Right ventricle myocardium inferior (tissue), 1 donor: ENCODE measurements at regions of chr15 and their contacts with region 1.

Region 1: GRCh38 chr15:70165716-70166284 is 68.1 kb upstream of the TLE3 start:
- DNase-seq: peak; percentile 75
- ATAC-seq: peak; percentile 93

Region 2: DNA sequence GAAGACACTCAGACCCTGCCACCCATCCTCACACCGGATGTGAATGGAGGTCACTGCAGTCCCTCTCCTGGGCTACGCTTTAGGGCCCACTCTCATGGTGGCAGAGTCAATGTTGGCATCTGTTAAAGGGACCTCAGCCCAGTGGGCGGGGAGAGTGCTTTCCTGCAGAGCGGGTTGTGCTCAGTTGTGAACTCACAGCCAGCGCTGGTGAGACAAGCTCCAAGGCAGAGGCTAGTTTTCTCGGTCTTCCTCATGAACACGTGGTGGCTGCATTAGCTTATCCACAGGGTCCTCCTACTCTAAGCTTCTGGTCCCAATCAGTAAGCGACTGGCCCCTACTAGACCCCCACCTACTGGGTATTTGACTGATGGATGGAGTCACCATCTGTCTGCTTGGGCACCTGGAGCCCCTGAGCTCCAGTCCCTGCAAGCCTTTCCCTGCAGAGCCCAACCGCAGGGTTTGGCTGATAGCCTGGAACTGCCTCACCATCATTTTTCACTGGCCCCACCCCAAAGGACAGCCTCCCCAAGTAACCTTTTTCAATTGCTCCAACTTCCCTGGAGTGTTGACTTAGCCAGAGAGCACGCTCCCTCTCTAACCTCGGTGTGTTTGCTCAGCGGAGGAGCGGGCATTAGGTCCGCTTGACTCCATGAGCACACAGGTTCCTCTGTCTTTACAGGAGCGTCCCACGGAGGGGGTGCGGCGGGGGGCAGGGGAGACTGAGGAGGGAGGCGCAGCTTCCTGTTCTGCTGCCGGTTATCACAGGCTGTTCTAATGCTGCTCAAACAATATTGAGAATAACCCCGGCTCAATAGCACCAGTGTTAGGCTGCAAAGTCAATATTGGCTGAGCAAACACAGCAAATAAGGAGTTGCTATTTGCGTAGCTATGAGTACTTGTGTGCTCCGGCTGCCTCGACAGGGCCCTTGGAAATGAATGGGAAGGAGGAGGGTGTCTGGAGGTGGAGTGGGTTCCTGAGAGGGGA is 571.5 kb before region 1 on chr15:
- intact Hi-C with region 1: loop called (anchors 5 kb)
- DNase-seq: no peak
- ATAC-seq: peak; percentile 48

Region 3: GRCh38 chr15:70033529-70034140 is 132.2 kb before region 1 on chr15:
- intact Hi-C with region 1: no loop called
- DNase-seq: no peak
- ATAC-seq: no peak

Region 4: GRCh38 chr15:70435369-70435768 is 269.6 kb after region 1 on chr15:
- intact Hi-C with region 1: loop called (anchors 2 kb)
- DNase-seq: no peak
- ATAC-seq: no peak

Region 5: DNA sequence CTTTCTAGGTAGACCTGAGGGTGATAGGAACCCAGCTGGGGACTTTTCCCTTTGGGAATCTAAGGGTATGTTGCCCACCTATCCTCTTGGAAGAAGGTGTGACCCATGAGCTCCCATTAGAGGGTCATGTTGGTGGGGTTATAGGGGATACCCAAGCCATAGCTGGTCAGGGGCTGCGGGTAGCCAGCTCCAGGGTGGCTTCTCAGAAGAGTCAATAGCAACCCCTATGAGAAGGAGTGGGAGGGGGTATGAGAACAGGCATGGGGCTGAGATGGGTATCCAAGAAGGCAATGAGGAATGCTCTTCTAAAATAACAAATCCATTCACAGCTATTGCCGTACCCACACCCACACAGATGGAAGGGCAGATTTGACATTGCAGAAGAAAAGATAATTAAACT is 379.7 kb after region 1 on chr15:
- intact Hi-C with region 1: no loop called
- DNase-seq: peak; percentile 4
- ATAC-seq: no peak